Spleen (tissue), 13 donors: ENCODE measurements at regions of chr10 and their contacts with region 1.

Region 1: DNA sequence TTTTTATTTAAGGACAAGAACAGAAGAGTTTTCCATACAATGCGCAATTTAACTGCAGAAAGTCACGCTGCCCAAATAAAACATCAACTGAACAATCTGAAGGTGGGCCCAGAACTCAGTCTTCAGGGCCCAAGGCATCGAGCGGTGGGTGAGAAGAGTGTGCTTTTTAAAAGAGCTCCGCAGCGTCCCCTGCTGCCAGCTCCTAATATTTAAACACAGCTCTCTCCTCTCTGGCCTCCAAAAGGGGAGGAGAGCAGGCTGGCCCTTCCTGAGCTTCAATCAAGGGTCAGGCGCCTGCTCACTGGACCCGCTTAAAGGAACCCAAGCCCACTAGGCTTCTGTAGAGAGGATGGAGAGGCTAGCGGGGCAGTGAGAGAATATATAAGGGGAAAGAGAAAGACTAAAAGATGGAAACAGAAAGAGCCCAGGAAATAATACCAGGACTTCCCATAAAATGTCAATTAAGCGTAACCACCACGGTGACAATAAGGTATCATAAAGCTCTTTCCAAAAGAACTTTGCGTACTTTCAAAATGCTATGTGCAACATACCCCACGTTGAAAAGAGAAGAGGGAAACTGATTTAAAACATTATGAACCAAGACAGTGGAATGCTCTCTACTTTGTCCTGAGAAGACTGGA is 2.8 kb downstream of the FAM53B start:
- DNase-seq: peak; percentile 91
- H3K4me3 ChIP-seq: peak overlapping the region in 7 of 8 donors; percentile 75 to 89 (median 84)
- H3K27ac ChIP-seq: peak overlapping the region; percentile 73 to 95 (median 90)
- H3K4me1 ChIP-seq: peaks cover 63 to 86% (median 75%) of the 10 kb centered on the region in 6 donors
- H3K27me3 ChIP-seq: no peaks in the 10 kb centered on the region
- CTCF ChIP-seq: peak; percentile 71 to 95 (median 84)
- POLR2A ChIP-seq: no peak

Region 2: GRCh38 chr10:124530215-124530665 is 211.2 kb before region 1 on chr10:
- intact Hi-C with region 1: loop called (anchors 5 kb)
- DNase-seq: peak; percentile 99
- H3K4me3 ChIP-seq: no peak overlapping the region
- H3K27ac ChIP-seq: no peak overlapping the region
- H3K4me1 ChIP-seq: peaks cover 5 to 42% (median 27%) of the 10 kb centered on the region in 6 donors
- H3K27me3 ChIP-seq: no peaks in the 10 kb centered on the region
- CTCF ChIP-seq: peak; percentile 78 to 96 (median 94)
- POLR2A ChIP-seq: no peak

Region 3: DNA sequence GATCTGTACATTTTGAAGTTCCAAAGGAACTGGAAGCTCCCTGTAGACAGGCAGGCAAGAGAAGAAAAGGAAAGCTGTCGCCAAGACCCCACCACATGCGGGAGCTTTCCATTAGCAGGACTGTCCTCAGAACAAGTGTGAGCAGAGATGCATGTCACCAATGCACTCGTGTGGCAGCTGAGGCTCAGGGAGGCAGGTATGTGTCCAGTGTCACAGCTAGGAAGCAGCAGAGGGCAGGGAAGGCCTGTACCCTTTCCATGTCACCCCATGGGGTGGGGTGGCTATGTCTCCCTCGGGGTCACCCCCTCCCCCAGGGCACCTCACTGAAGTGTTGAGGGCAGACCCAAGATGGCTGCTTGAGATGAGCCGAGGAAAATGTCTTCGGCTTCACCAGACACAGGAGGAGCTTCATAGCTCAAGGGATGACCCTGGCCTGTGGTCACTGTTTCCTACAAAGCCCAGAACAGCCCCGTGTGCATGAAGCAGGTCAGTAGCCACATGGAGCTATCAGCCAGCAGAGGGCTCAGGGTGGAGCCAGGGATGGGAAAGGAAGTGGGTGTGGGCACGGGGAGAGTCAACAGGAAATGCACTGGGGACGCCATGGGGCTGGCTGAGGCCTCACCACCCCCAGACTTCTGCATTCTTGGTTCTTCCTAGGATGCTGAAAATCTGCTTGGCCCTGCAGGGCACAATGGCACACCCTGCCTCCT is 93.8 kb before region 1 on chr10:
- intact Hi-C with region 1: loop called (anchors 10 kb)
- DNase-seq: peak; percentile 96
- H3K4me3 ChIP-seq: peak overlapping the region in 5 of 8 donors; percentile 2 to 58 (median 5)
- H3K27ac ChIP-seq: peak overlapping the region; percentile 87 to 97 (median 92)
- H3K4me1 ChIP-seq: peaks cover 73 to 100% (median 100%) of the 10 kb centered on the region in 6 donors
- H3K27me3 ChIP-seq: no peaks in the 10 kb centered on the region
- CTCF ChIP-seq: peak; percentile 41 to 88 (median 73)
- POLR2A ChIP-seq: no peak